ENCODE measurements at regions of chr2 and their contacts with region 1.

Region 1: GRCh38 chr2:186589612-186590349 is at the start of gene ITGAV:
- DNase-seq: peak; percentile 80
- H3K4me3 Mint-ChIP-seq: peak within 1 kb of the TSS; percentile 93
- H3K27ac Mint-ChIP-seq: peak within 1 kb of the TSS; percentile 91
- H3K4me1 Mint-ChIP-seq: peaks cover 34% of the 10 kb centered on the region
- H3K27me3 Mint-ChIP-seq: peaks cover 6% of the 10 kb centered on the region
- total RNA-seq, gene ITGAV: 8.4 and 8.7 TPM in 2 replicates

Region 2: GRCh38 chr2:186515376-186515775 is 74.4 kb before region 1 on chr2:
- intact Hi-C with region 1: loop called (anchors 2 kb)
- DNase-seq: no peak
- H3K4me3 Mint-ChIP-seq: no peak overlapping the region
- H3K27ac Mint-ChIP-seq: no peak overlapping the region
- H3K4me1 Mint-ChIP-seq: no peaks in the 10 kb centered on the region
- H3K27me3 Mint-ChIP-seq: no peaks in the 10 kb centered on the region

Region 3: DNA sequence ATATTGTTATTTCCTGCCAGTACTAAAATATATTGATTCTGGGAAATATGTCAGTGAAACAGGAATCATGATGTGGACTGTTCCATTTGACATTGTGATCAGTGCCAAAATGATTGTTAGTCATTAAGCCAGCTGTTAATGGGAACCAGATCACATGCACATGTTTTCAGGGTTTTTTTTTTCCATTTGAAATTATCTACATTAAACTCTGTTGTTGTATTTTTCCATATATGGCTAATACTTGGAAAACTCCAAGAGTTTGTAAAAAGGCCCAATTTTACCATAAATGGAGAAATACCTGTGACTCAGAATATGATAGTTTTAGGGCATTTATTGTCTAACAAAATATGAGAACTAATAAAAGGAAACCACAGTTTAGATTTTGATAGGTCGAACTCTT is 13.5 kb after region 1 on chr2:
- intact Hi-C with region 1: loop called (anchors 1 kb)
- DNase-seq: no peak
- H3K4me3 Mint-ChIP-seq: no peak overlapping the region
- H3K27ac Mint-ChIP-seq: no peak overlapping the region
- H3K4me1 Mint-ChIP-seq: no peaks in the 10 kb centered on the region
- H3K27me3 Mint-ChIP-seq: no peaks in the 10 kb centered on the region

Region 4: DNA sequence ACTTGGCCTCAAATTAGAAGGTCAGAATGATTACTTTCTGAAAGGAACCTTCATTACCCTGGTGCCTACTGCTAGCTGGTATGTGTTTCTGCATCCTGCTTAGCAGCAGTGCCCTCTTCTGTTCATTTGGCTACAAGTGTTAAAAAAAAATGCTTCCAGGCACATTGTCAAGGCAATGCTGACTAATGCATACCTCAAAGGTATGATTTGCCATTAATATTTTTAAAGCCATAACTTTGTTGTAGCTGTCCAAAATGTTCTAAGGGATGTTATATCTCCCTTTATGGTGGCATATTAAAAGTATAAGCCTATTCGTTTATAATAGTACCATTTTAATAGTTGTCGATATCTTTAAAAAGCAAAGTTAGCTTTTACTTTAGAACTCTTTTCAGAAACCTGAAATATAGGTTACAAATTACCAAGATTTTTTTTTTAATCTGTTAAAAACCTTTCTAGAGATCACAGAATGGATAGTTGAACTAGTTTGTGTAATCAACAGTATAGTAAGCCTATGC is 52.1 kb after region 1 on chr2:
- intact Hi-C with region 1: loop called (anchors 1 kb)
- DNase-seq: peak; percentile 26
- H3K4me3 Mint-ChIP-seq: no peak overlapping the region
- H3K27ac Mint-ChIP-seq: no peak overlapping the region
- H3K4me1 Mint-ChIP-seq: peaks cover 21% of the 10 kb centered on the region
- H3K27me3 Mint-ChIP-seq: no peaks in the 10 kb centered on the region

Region 5: DNA sequence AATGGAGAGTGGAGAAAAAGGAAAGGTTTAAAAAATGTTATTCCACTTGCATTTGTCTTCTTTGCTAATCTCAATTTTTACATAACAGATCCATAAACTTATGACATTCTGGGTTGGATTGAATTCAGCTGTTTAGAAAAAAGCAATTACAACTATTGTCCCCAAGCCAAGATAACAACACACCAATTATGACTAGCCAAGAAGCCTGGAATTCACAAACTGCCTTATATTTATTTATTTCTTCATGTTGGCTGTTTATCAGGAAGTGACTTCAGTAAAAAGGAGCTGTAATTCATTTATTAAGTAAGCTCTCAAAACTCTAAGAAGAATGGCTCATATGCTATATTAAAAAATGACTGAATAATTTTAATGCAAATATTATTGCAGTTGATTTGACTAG is 720.9 kb after region 1 on chr2:
- intact Hi-C with region 1: no loop called
- DNase-seq: no peak
- H3K4me3 Mint-ChIP-seq: no peak overlapping the region
- H3K27ac Mint-ChIP-seq: no peak overlapping the region
- H3K4me1 Mint-ChIP-seq: no peaks in the 10 kb centered on the region
- H3K27me3 Mint-ChIP-seq: no peaks in the 10 kb centered on the region